ENCODE measurements at regions of chr7 and their contacts with region 1.

Region 1: GRCh38 chr7:31633894-31634494 is 53.0 kb upstream of the PPP1R17 start:
- H3K4me3 Mint-ChIP-seq: no peak overlapping the region
- H3K27ac Mint-ChIP-seq: no peak overlapping the region
- H3K4me1 Mint-ChIP-seq: no peaks in the 10 kb centered on the region
- H3K27me3 Mint-ChIP-seq: peaks cover 3% of the 10 kb centered on the region

Region 2: DNA sequence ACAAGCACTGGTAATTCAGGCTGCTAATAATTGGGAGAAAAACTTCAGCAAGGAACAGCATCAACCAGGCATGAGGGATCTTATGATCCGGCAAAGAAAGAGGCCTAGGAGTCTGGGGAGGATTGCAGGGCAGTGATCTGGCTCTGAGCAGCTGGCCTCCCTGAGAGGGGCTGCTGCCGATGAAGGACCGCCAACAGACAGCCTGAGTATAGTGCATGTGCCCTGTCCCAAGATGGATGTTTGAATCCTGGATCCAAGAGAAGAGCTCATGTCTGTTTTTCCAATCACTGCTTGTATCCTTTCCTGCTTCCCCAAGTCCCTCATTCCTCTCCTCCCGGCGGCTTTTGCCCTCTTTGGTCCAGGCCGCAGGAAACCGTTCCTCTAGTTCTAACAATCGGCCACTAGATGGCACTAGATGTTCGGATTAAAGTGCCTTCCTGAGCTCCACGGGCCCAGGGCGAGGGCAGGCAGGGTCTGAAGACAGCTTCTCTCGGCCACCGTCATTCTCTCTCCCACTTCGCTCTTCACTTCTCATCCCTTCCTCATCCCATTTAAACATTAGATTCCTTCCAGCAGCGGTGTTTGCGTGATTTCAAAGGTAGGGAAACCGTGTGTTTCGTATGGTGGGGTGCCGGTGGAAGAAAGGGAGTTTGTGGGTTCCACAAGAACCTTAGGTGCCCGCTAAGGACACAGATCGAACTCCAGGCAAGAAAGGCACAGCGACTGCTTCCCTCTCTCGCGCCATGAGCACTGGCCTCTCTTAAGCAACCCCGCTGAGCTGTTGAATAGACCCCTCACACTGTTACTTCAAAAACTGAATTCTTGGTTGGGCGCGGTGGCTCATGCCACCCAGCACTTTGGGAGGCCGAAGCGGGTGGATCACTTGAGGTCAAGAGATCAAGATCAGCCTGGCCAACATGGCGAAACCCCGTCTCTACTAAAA is 499.5 kb before region 1 on chr7:
- intact Hi-C with region 1: loop called (anchors 5 kb)
- H3K4me3 Mint-ChIP-seq: no peak overlapping the region
- H3K27ac Mint-ChIP-seq: no peak overlapping the region
- H3K4me1 Mint-ChIP-seq: peaks cover 5% of the 10 kb centered on the region
- H3K27me3 Mint-ChIP-seq: peaks cover 5% of the 10 kb centered on the region

Region 3: GRCh38 chr7:31373337-31374289 is 260.4 kb before region 1 on chr7:
- intact Hi-C with region 1: loop called (anchors 5 kb)
- H3K4me3 Mint-ChIP-seq: no peak overlapping the region
- H3K27ac Mint-ChIP-seq: no peak overlapping the region
- H3K4me1 Mint-ChIP-seq: no peaks in the 10 kb centered on the region
- H3K27me3 Mint-ChIP-seq: no peaks in the 10 kb centered on the region

Region 4: DNA sequence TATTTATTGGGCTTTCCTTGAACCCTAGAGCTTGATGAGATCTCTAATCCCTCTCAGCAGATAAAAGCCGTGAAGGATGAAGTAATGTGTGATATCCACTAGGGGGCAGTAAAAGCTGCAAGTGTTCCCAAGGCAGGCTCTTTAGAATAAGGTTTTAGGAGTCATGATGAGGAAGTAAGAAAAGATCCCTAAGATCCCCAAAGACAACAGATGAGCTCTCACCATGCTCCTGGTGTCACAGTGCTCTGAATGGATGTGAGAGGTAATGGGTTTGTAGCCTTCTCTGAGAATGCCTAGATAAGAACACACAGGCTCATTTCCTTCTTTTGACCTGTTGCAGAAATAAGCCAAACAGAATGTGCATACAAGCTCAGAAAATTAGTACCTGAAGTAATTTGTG is 190.5 kb before region 1 on chr7:
- intact Hi-C with region 1: loop called (anchors 5 kb)
- H3K4me3 Mint-ChIP-seq: no peak overlapping the region
- H3K27ac Mint-ChIP-seq: no peak overlapping the region
- H3K4me1 Mint-ChIP-seq: no peaks in the 10 kb centered on the region
- H3K27me3 Mint-ChIP-seq: peaks cover 10% of the 10 kb centered on the region